PC-3 (cell line): ENCODE measurements at regions of chr6 and their contacts with region 1.

Region 1: DNA sequence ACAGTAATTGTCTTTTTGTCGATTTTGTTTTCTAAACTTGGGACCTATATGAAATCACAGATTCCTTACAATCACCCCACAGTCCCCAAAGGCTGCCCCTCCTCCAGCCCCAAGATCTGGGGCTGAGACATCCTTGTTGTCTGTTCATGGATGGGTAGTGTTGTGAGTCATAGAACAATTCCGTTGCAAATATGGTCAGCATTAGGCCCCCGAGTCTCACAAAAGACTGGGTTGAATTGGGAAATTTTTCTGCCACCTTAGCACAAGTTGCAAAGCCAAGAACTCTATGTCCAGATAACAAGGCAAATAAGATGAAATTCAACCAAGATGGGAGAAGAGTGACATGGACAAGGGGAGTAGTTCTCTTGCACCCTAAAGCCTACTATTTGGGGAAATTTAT is 10.5 kb upstream of the TAB2 start:
- DNase-seq: no peak
- ATAC-seq: no peak; the same call in 1 of the 2 replicates
- H3K4me3 ChIP-seq: no peak overlapping the region
- H3K27ac ChIP-seq: no peak overlapping the region
- H3K4me1 ChIP-seq: peaks cover 13% of the 10 kb centered on the region
- H3K27me3 ChIP-seq: no peaks in the 10 kb centered on the region
- CTCF ChIP-seq: no peak

Region 2: GRCh38 chr6:149342525-149342924 is 35.6 kb after region 1 on chr6:
- CTCF ChIA-PET with region 1: no interaction called
- POLR2A ChIA-PET with region 1: interaction called, 13 read pairs
- intact Hi-C with region 1: no loop called
- DNase-seq: no peak
- ATAC-seq: no peak
- H3K4me3 ChIP-seq: no peak overlapping the region
- H3K27ac ChIP-seq: no peak overlapping the region
- H3K4me1 ChIP-seq: peaks cover 19% of the 10 kb centered on the region
- H3K27me3 ChIP-seq: no peaks in the 10 kb centered on the region
- CTCF ChIP-seq: no peak